Right ventricle myocardium inferior (tissue), 1 donor: ENCODE measurements at regions of chr1 and their contacts with region 1.

Region 1: GRCh38 chr1:56077206-56077605 is 502.2 kb downstream of the PLPP3 start:
- DNase-seq: no peak
- ATAC-seq: peak; percentile 66

Region 2: GRCh38 chr1:55803429-55803828 is 273.8 kb before region 1 on chr1:
- intact Hi-C with region 1: no loop called
- DNase-seq: no peak
- ATAC-seq: no peak

Region 3: GRCh38 chr1:55955016-55955621 is 122.1 kb before region 1 on chr1:
- intact Hi-C with region 1: loop called (anchors 5 kb)
- DNase-seq: no peak
- ATAC-seq: no peak

Region 4: GRCh38 chr1:55981010-55981650 is 96.1 kb before region 1 on chr1:
- intact Hi-C with region 1: no loop called
- DNase-seq: no peak
- ATAC-seq: no peak

Region 5: DNA sequence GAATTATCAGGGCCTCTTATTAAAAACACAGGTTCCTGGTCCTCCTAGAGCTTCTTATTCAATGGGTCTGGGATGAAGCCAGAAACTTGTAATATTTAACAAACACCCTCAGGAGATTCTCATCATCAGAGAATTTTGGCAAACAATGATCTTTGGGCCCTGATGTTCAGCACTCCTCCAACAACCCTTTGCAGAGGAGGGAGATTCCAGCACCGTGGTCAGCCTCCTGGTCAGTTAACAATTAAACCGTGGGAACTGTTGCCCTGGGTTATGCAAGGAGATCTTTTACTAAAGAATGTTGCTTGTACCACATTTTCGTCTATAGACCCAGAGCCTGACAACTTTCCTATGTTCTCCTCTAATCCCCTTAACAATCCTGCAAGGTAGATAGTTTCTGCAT is 207.7 kb after region 1 on chr1:
- intact Hi-C with region 1: no loop called
- DNase-seq: peak; percentile 14
- ATAC-seq: peak; percentile 81